ENCODE measurements at regions of chr3 and their contacts with region 1.

Region 1: DNA sequence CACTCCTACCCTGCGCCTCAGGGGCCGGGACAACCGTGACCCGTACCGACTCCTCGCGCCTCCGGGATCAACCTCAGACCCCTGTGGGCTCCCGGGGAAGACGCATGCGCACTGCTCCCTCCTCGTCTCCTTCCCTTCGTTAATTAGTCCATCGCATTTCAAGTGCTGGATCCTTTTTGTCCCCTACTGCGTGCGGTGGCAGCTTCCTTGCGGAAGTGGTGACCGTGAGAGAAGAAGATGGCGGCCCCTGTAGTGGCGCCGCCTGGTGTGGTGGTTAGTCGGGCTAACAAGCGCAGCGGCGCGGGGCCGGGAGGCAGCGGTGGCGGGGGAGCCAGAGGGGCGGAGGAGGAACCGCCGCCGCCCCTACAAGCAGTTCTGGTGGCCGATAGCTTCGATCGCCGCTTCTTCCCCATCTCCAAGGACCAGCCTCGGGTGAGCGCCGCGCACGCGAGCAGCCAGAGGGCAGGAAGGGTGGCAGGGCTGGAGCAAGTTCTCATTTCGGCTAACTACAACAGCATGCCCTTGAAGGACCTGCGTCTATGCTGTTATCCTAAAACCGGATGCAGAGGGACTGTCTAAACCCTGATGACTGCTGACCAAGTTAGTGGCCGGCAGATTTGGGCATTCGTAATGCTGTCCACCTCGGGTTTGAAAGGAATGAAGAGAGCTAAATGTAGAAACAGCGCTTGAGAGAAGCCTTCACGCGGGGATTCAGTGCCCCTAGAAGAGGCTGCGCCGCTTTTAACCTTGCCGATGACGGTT is at the start of gene EIF2B5:
- DNase-seq: peak; percentile 91 to 95
- ATAC-seq: peak; percentile 94 to 98 (median 96)
- H3K4me3 ChIP-seq: peak within 1 kb of the TSS; percentile 53 to 99 (median 87)
- H3K27ac ChIP-seq: peak within 1 kb of the TSS; percentile 28 to 95 (median 90)
- H3K4me1 ChIP-seq: peaks cover 4 to 28% (median 22%) of the 10 kb centered on the region in 9 donors
- H3K27me3 ChIP-seq: no peaks in the 10 kb centered on the region
- CTCF ChIP-seq: peak in 7 of 9 donors; percentile 20 to 73 (median 52)
- total RNA-seq, gene EIF2B5: 26.8 to 37.3 (median 31.6) TPM

Region 2: DNA sequence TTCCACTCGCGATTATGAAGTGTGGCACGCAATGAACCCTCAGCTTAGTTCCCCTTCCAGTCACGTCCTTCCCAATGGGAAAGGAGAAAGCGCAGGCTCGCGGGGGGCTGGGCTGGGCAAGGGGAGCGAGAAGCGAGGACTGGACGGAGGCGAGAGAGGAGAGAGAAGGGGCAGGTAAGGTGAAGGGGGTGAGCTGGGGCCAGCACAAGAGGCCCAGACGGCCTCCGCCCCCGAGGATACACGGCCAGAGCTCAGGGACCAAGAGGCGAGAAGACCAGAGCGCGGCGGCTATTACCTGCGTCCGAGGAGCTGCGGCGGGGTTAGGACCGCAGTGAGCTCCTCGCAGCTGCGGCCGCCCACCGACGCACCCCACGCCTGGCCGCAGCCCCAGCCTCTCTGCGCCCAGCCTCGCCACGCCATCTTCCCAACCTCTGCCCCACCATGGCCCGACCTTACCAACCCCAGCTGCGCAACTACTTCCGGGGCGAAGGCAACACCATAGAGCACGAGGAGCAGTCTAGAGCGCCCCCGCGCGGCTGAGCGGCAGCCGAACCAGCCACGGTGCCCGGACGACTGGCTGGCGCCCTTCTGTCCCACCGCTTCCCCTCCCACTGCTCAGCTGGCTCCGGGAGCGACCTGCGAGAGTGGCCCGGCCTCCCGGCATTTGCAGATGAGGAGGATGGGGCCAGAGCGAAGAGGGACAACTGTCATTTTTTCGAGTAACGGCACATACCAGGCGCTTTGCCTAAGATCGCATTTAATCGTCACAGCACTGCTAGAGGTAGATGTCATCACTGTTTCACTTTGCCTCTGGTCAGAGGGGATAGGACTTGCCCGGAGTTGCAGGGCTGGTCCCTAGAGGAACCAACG is 250.7 kb before region 1 on chr3 and contains the start of gene PARL:
- intact Hi-C with region 1: loop called in 2 of 10 experiments (anchors 10 kb)
- DNase-seq: peak; percentile 96 to 97
- ATAC-seq: peak; percentile 99 to 100 (median 100)
- H3K4me3 ChIP-seq: peak within 1 kb of the TSS; percentile 79 to 99 (median 90)
- H3K27ac ChIP-seq: peak within 1 kb of the TSS in 9 of 10 donors; percentile 75 to 95 (median 84)
- H3K4me1 ChIP-seq: peaks cover 0 to 41% (median 25%) of the 10 kb centered on the region in 9 donors
- H3K27me3 ChIP-seq: no peaks in the 10 kb centered on the region
- CTCF ChIP-seq: peak; percentile 84 to 99 (median 96)
- total RNA-seq, gene PARL: 52.7 to 70.6 (median 60.7) TPM

Region 3: GRCh38 chr3:184017672-184018423 is 117.5 kb before region 1 on chr3 and contains the start of gene ABCC5:
- intact Hi-C with region 1: loop called in 6 of 10 experiments (anchors 2 to 10 kb)
- DNase-seq: peak; percentile 94
- ATAC-seq: peak; percentile 95 to 99 (median 98)
- H3K4me3 ChIP-seq: peak within 1 kb of the TSS; percentile 82 to 100 (median 94)
- H3K27ac ChIP-seq: peak within 1 kb of the TSS; percentile 57 to 91 (median 85)
- H3K4me1 ChIP-seq: peaks cover 0 to 42% (median 21%) of the 10 kb centered on the region in 9 donors
- H3K27me3 ChIP-seq: no peaks in the 10 kb centered on the region
- CTCF ChIP-seq: peak in 8 of 9 donors; percentile 2 to 60 (median 54)
- total RNA-seq, gene ABCC5: 26.0 to 89.6 (median 40.9) TPM

Region 4: DNA sequence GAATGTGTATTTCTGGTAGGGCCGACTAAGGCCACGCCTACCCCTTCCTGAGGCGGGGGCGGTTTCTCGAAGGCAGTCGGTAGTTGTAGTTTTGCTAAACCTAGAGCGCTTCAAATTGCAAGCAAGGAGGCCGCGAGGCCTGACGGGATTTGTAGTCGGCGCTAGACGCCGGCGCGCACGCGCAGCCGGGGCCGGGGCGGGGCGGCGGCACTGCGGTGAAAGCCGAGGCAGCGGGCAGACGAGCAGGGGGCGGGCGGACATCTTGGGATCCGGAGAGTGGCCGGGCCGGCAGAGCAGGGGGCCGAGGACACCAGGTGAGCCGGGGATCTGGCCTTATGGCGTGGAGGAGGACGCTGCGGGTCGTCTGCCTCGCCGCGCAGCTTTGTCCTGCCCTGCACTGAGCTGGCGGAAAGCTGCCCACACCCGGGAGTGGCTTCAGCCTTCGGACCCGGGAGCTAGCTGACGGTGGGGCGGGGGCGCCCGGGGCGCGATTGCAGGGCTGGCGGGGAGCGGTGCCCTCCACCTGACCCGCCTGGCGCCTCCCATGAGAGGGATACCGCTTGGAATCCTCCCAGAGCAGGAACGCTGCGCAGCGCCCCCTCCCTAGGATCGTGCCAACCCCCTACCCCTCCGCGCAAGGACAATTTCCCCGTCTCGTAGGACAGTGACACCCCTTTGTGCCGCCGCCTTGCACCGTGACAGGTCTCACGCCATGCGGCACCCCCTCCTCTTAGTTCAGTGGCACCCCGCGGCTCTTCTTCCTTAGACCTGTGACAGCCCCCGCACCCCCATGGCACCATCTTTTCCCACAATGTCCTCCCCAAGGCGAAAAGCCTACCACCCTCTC is 39.5 kb after region 1 on chr3 and contains the start of gene AP2M1:
- intact Hi-C with region 1: loop called in 1 of 10 experiments (anchors 5 kb)
- DNase-seq: peak; percentile 98
- ATAC-seq: peak; percentile 92 to 96 (median 94)
- H3K4me3 ChIP-seq: peak within 1 kb of the TSS; percentile 86 to 100 (median 94)
- H3K27ac ChIP-seq: peak within 1 kb of the TSS; percentile 87 to 99 (median 98)
- H3K4me1 ChIP-seq: peaks cover 10 to 60% (median 42%) of the 10 kb centered on the region in 9 donors
- H3K27me3 ChIP-seq: no peaks in the 10 kb centered on the region
- CTCF ChIP-seq: peak in 1 of 9 donors; percentile 11
- total RNA-seq, gene AP2M1: 263 to 371 (median 321) TPM

Region 5: GRCh38 chr3:184250167-184250828 is 115.0 kb after region 1 on chr3:
- intact Hi-C with region 1: loop called in 8 of 10 experiments (anchors 1 to 10 kb)
- DNase-seq: peak; percentile 80 to 85
- ATAC-seq: peak; percentile 71 to 90 (median 85)
- H3K4me3 ChIP-seq: peak overlapping the region; percentile 63 to 92 (median 82)
- H3K27ac ChIP-seq: peak overlapping the region in 9 of 10 donors; percentile 77 to 94 (median 83)
- H3K4me1 ChIP-seq: peaks cover 0 to 23% (median 18%) of the 10 kb centered on the region in 9 donors
- H3K27me3 ChIP-seq: no peaks in the 10 kb centered on the region
- CTCF ChIP-seq: peak; percentile 86 to 97 (median 93)